ENCODE measurements at regions of chr4 and their contacts with region 1.

Region 1: DNA sequence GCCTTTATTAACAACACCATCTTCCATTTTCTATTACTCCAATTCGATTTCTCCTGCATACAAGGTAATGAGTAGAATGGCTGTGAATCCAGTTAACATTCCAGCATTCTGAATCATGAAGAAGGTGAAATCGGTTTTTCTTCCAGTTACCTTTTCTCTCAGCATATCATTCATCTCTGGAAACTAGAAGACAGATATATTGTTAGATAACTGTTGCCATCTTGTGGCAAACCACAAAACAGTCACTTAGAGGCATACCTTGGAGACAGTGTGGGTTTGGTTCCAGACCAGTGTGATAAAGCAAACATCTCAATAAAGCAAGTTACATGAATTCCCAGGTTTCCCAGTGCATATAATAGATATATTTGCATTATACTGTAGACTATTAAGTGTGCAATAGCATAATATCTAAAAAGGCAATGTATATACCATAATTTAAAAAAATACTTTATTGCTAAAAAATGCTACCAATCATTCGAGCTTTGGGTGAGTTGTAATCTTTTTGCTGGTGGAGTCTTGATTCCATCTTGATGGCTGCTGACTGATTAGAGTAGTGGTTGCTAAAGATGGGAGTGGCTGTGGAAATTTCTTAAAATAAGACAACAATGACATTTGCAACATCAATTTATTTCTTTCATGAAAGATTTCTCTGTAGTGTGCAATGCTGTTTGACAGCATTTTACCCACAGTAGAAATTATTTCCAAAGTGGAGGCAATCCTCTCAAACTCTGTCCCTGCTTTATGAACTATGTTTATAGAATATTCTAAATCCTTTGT is 82.1 kb downstream of the SLC39A8 start:
- DNase-seq: no peak
- H3K4me3 Mint-ChIP-seq: no peak overlapping the region
- H3K27ac Mint-ChIP-seq: peak overlapping the region; percentile 19
- H3K4me1 Mint-ChIP-seq: peaks cover 16% of the 10 kb centered on the region
- H3K27me3 Mint-ChIP-seq: no peaks in the 10 kb centered on the region

Region 2: GRCh38 chr4:101824500-101824899 is 438.7 kb before region 1 on chr4:
- intact Hi-C with region 1: no loop called
- DNase-seq: no peak
- H3K4me3 Mint-ChIP-seq: no peak overlapping the region
- H3K27ac Mint-ChIP-seq: no peak overlapping the region
- H3K4me1 Mint-ChIP-seq: no peaks in the 10 kb centered on the region
- H3K27me3 Mint-ChIP-seq: no peaks in the 10 kb centered on the region

Region 3: DNA sequence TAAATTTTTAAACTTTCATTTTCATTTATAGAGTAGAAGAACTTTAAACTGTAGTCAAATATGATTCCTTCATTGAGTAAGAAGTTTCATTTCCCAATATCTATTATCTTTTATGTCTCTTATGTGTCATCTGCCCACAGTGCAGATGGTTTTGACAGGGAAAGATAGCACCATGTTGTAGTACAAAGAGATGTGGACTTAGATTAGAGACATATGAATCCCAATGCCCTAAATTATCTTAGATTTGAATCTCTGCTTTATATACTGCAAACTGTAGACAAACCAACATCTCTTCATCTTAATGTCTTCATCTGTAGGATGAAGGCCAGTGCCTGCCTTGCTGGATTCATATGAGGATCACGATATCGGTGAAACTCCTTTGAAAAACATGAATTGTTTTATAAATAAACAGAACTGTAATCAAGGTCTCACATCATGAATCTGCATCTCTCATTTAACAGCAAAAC is 255.2 kb before region 1 on chr4:
- intact Hi-C with region 1: loop called (anchors 5 kb)
- DNase-seq: no peak
- H3K4me3 Mint-ChIP-seq: no peak overlapping the region
- H3K27ac Mint-ChIP-seq: no peak overlapping the region
- H3K4me1 Mint-ChIP-seq: no peaks in the 10 kb centered on the region
- H3K27me3 Mint-ChIP-seq: peaks cover 7% of the 10 kb centered on the region

Region 4: DNA sequence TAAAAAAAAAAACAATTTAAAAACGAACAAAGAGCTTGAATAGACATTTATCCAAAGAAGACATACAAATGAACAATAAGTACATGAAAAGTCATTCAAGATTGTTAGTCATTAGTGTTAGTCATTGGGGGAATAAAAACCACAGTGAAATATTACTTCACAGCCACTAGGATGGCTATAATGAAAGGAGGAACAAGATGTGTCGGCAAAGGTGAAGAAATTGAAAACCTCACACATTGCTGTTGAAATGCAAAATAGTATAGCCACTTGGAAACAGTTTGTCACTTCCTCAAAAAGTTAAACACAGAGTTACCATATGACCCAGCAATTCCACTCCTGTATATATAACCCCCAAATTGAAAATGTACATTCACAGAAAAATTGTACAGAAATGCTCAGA is 127.2 kb after region 1 on chr4:
- intact Hi-C with region 1: loop called (anchors 1 kb)
- DNase-seq: no peak
- H3K4me3 Mint-ChIP-seq: no peak overlapping the region
- H3K27ac Mint-ChIP-seq: peak overlapping the region; percentile 58
- H3K4me1 Mint-ChIP-seq: peaks cover 20% of the 10 kb centered on the region
- H3K27me3 Mint-ChIP-seq: peaks cover 7% of the 10 kb centered on the region

Measured in activated T-helper 1 cell treated with anti-CD3 and anti-CD28 coated beads, Interleukin-12 subunit alpha, Interleukin-12 subunit beta, Interleukin-2, Interleukin-4 antibody, amounts not matched to agents 30 ng/mL and 10 ng/mL and 1 ng/mL, durations not matched to agents 14 hours and 24 hours and 36 hours (primary cell).